Calu3 (cell line): ENCODE measurements at regions of chr2 and their contacts with region 1.

Region 1: DNA sequence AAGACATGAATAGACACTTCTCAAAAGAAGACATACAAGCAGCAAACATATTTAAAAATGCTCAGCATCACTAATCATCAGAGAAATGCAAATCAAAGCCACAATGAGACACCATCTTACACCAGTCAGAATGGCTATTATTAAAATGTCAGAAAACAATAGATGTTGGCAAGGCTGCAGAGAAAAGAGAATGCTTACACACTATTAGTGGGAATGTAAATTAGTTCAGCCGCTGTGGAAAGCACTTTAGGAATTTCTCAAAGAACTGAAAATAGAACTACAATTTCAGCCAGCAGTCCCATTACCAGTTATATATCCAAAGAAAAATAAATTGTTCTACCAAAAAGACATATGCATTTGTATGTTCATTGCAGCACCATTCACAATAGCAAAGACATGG is 61.7 kb downstream of the STRADB start:
- DNase-seq: no peak
- H3K4me3 Mint-ChIP-seq: no peak overlapping the region
- H3K27ac Mint-ChIP-seq: no peak overlapping the region
- H3K4me1 Mint-ChIP-seq: no peaks in the 10 kb centered on the region
- H3K27me3 Mint-ChIP-seq: no peaks in the 10 kb centered on the region
- CTCF ChIP-seq: no peak

Region 2: DNA sequence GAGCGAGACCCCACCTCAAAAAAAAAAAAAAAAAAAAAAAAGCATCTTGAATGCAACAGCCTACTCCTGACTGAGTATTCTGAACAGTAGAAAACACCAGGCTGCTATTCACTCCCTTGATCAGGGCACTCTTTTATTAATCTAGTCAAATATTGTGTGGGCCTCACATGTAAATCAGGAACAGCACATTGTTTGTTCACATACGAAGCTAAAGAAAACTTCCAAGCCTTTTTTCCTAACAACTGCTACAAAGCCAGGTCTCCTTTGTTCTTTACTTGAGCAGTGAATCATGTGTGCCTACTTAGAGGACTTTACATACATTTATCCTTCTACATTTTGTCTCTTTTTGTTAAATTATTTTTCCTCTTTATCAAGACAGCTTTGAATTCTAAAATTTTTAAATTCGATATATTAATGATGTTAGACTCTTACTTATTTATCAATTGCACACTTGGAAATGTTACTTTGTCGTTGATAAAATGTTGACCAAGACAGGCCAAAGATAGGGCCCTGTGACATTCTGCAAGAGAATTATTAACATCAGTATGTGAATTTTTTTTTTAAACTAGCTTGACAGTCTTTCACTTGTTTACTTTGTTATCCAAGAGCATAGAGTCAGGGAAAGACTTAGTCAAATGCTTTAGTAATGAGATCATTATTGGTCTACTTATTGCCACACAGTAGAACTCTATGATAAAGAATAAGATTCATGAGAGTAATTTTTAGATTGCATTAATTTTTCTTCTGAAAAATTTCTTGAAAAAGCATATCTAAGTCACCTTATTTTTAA is 1193.5 kb before region 1 on chr2:
- CTCF ChIA-PET with region 1: interaction called, 10 read pairs
- intact Hi-C with region 1: no loop called
- DNase-seq: no peak
- H3K4me3 Mint-ChIP-seq: no peak overlapping the region
- H3K27ac Mint-ChIP-seq: peak overlapping the region; percentile 60
- H3K4me1 Mint-ChIP-seq: peaks cover 84% of the 10 kb centered on the region
- H3K27me3 Mint-ChIP-seq: no peaks in the 10 kb centered on the region
- CTCF ChIP-seq: no peak